Calu3 (cell line): ENCODE measurements at regions of chr10 and their contacts with region 1.

Region 1: DNA sequence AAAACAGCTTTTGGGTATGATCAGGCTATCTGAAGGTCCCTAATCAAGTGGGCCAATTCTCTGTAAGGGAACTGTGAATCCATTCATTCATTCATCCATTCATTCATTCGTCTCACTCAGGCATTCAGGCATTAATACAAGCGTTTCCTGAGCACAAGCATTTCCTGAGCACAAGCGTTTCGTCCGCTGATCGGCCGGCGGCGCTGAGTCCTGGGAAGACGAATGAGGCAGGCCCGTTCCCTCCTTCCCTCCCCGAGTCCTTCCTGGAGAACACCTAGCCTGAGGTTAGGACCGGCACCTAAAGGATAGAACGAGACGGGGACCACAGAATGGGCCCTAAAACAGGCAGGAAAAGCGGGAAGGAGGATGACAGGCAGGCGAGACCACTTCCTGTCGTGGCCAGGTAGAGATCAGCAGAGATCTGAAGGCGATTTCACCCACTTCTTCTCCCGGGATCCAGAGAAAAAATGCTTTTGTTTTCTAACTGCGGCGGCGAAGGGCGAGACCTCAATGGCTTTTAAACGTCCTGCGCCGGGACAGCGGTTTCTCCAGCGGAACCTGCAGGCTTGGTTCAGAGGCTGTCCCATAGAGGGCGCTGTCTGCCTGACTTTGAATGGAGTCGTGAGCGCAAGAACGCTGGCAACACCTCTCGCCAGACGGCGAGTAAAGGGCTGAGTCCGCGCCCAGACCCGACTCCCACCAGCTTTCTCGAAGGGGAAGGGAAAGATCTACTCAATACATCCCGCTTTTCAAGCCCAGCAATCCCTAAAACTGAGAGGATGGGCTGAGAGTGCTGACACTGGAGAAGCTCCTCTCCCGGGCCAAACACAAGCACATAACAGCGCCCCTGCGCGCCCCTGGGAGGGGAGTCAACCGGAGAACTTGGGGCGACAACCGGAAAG is 2.9 kb upstream of the HMX3 start:
- DNase-seq: peak; percentile 84
- H3K4me3 Mint-ChIP-seq: peak overlapping the region; percentile 21
- H3K27ac Mint-ChIP-seq: no peak overlapping the region
- H3K4me1 Mint-ChIP-seq: no peaks in the 10 kb centered on the region
- H3K27me3 Mint-ChIP-seq: peaks cover 49% of the 10 kb centered on the region
- CTCF ChIP-seq: peak; percentile 75

Region 2: DNA sequence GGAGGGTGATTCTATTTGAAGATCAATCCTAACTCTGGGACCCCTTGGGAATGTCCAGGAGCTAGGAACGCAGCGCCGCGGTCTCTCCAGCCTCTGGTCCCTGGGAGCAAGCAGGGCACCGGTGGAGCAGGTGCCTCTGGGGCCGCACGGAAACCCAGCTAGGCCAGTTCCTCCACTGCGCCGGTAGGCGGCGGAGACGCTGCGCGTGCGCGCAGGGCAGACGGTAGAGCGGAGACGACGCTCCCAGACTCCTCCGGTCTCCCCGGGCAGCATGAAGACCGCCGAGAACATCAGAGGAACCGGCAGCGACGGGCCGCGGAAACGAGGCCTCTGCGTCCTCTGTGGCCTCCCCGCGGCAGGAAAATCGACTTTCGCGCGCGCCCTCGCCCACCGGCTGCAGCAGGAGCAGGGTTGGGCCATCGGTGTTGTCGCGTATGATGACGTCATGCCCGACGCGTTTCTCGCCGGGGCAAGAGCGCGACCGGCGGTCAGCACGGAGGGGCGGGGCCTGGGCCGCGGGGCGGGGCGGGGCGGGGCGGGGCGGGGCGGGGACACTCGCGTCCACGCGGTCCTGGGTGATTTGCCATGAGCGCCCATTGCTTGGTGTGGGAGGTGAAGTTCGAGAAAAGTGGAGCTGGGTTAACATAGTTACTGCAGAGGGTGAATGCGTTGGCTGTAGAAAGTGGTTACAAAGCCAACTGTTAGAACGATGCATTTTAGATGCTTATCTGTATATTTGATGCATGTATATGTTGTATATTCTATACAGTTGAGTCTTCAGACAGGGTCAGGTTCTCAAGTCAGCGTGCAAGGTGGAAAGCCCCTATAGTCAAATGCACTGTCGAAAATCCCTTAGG is 152.4 kb before region 1 on chr10 and contains the start of gene PSTK:
- CTCF ChIA-PET with region 1: no interaction called
- intact Hi-C with region 1: no loop called
- DNase-seq: peak; percentile 79
- H3K4me3 Mint-ChIP-seq: peak within 1 kb of the TSS; percentile 82
- H3K27ac Mint-ChIP-seq: peak within 1 kb of the TSS; percentile 87
- H3K4me1 Mint-ChIP-seq: no peaks in the 10 kb centered on the region
- H3K27me3 Mint-ChIP-seq: no peaks in the 10 kb centered on the region
- CTCF ChIP-seq: peak; percentile 72
- total RNA-seq, gene PSTK: 1.2 and 3.3 TPM in 2 replicates

Region 3: GRCh38 chr10:123043409-123043925 is 89.4 kb before region 1 on chr10:
- CTCF ChIA-PET with region 1: no interaction called
- intact Hi-C with region 1: loop called (anchors 5 kb)
- DNase-seq: peak; percentile 51
- H3K4me3 Mint-ChIP-seq: no peak overlapping the region
- H3K27ac Mint-ChIP-seq: no peak overlapping the region
- H3K4me1 Mint-ChIP-seq: no peaks in the 10 kb centered on the region
- H3K27me3 Mint-ChIP-seq: no peaks in the 10 kb centered on the region
- CTCF ChIP-seq: peak; percentile 58

Region 4: DNA sequence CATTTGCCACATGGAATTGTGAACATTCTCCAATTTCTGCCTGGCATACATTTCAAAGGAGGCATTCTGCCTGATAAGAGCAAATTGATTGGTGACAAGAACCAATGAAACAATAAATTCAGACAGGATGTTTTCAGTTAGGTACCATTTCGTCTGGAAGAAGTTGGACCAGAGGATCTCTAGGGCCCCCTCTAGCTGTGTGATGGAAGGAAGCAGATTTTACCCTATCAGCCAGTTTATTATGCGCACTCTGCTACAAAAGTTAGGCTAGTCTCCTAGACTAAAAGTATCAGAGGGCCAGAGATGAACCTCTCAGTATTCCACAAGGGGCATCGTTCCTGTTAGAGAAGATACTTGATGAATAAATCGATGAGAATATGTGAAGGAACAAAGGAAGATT is 139.3 kb after region 1 on chr10:
- CTCF ChIA-PET with region 1: no interaction called
- intact Hi-C with region 1: loop called (anchors 10 kb)
- DNase-seq: no peak
- H3K4me3 Mint-ChIP-seq: no peak overlapping the region
- H3K27ac Mint-ChIP-seq: no peak overlapping the region
- H3K4me1 Mint-ChIP-seq: no peaks in the 10 kb centered on the region
- H3K27me3 Mint-ChIP-seq: peaks cover 10% of the 10 kb centered on the region
- CTCF ChIP-seq: no peak

Region 5: GRCh38 chr10:123327450-123327849 is 194.6 kb after region 1 on chr10:
- CTCF ChIA-PET with region 1: no interaction called
- intact Hi-C with region 1: no loop called
- DNase-seq: no peak
- H3K4me3 Mint-ChIP-seq: no peak overlapping the region
- H3K27ac Mint-ChIP-seq: no peak overlapping the region
- H3K4me1 Mint-ChIP-seq: no peaks in the 10 kb centered on the region
- H3K27me3 Mint-ChIP-seq: peaks cover 16% of the 10 kb centered on the region
- CTCF ChIP-seq: no peak

Region 6: DNA sequence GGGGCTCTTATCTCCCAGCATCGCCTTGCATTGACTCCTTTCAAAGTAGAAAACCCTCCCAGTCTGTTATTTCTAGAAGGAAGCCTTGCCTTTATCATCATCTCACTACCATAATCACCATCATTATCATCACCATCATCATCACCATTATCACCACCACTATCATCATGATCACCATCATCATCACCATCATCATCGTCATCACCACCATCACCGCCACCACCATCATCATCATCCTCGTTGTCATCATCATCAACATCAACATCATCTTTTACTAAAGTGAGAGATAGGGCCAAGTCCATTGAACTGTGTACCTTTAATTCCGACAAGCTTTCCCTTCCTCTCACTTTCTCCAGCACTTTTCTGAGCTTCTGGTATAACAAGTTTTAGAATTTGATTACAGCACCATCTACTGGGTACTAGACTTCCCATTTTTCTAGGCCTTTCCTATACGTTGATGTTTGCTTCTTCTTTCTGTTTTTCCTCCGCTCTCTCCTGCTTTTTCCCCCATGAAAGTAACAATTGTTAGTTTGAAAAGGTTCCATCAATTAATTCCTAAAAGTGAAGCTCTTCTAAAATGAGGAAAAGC is 247.8 kb after region 1 on chr10:
- CTCF ChIA-PET with region 1: no interaction called
- intact Hi-C with region 1: loop called (anchors 2 kb)
- DNase-seq: no peak
- H3K4me3 Mint-ChIP-seq: no peak overlapping the region
- H3K27ac Mint-ChIP-seq: no peak overlapping the region
- H3K4me1 Mint-ChIP-seq: no peaks in the 10 kb centered on the region
- H3K27me3 Mint-ChIP-seq: peaks cover 25% of the 10 kb centered on the region
- CTCF ChIP-seq: no peak

Region 7: GRCh38 chr10:123559066-123559822 is 426.4 kb after region 1 on chr10:
- CTCF ChIA-PET with region 1: interaction called, 3 read pairs
- intact Hi-C with region 1: loop called (anchors 2 kb)
- DNase-seq: peak; percentile 70
- H3K4me3 Mint-ChIP-seq: no peak overlapping the region
- H3K27ac Mint-ChIP-seq: no peak overlapping the region
- H3K4me1 Mint-ChIP-seq: no peaks in the 10 kb centered on the region
- H3K27me3 Mint-ChIP-seq: peaks cover 30% of the 10 kb centered on the region
- CTCF ChIP-seq: peak; percentile 84